ENCODE measurements at regions of chr20 and their contacts with region 1.

Region 1: DNA sequence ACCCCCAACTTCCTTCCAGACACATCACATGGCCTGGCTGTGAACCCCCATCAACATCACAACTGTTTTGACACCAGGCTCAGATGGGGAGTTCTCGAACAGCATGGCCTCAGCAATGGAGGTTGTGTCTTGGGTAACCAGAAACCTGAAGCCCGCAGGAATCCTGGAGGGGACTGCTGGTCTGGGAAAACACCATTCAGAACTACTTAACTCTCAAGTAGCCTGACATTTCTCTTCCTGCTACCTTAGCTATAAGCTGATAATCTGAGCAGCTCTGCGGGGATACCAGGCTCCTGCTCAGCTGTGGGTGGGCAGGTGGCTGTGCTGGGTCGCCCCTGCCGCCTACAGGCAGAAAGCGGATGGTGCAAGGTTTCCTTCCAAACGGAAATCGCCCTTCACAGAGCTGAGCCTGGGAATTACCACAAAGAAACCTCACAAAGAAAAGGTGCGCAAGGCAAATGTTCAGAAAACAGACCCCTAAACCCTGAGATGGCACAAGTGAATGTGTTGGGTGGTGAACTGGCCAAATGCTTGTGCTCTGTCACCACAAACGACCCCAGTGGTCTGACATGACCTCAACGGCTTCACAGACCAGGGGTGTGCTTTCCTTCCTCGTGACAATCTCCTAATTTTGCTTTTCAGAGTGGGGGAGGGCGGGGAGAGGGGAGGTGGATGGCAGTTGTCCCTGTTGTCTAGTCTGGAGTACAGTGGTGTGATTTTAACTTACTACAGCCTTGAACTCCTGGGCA is 29.5 kb downstream of the SNX5 start:
- DNase-seq: peak; percentile 48
- ATAC-seq: peak; percentile 88
- H3K4me3 Mint-ChIP-seq: no peak overlapping the region
- H3K27ac Mint-ChIP-seq: no peak overlapping the region
- H3K4me1 Mint-ChIP-seq: peaks cover 33% of the 10 kb centered on the region
- H3K27me3 Mint-ChIP-seq: no peaks in the 10 kb centered on the region
- CTCF ChIP-seq: peak; percentile 55

Region 2: DNA sequence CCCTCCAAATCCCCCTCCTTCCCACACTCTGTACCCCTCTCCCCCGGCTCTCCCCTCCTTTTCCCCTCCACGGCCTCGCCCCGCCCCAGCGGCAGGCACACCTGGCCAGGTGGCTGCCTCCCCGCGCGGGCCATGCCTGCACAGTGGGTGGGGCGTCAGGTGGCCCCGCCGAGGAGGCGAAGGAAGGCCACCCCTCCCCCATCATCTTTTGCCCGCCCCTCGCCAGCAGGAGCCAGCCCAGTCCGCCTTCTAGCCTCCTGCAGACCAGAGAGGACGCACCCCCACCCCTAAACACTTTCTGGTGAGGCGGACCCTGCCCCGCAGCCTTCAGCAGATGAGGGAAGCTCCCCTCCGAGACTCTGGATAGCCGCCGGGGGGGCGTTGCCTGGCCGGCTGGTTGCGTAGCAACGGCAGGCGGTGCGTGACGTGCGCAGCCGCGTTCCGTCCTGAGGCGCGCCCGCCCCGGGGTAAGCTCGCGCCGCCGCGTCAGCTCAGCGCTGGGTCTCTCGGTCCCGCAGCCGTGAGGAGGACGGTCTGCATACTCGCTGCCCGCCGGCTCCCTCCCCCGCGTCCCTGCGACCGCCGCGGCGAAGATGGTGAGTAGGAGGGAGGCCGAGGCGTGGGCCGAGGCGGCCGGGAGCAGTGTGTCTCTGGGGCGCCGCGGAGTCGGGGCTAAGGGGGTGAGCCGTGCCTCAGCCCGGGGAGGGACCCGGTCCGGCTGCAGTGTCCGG is 369.3 kb before region 1 on chr20 and contains the start of gene DSTN:
- CTCF ChIA-PET with region 1: no interaction called
- POLR2A ChIA-PET with region 1: no interaction called
- intact Hi-C with region 1: loop called (anchors 1 kb)
- DNase-seq: peak; percentile 88
- ATAC-seq: peak; percentile 89
- H3K4me3 Mint-ChIP-seq: peak within 1 kb of the TSS; percentile 93
- H3K27ac Mint-ChIP-seq: peak within 1 kb of the TSS; percentile 85
- H3K4me1 Mint-ChIP-seq: peaks cover 16% of the 10 kb centered on the region
- H3K27me3 Mint-ChIP-seq: peaks cover 2% of the 10 kb centered on the region
- CTCF ChIP-seq: no peak
- total RNA-seq, gene DSTN: 14.4 and 20.1 TPM in 2 replicates

Region 3: DNA sequence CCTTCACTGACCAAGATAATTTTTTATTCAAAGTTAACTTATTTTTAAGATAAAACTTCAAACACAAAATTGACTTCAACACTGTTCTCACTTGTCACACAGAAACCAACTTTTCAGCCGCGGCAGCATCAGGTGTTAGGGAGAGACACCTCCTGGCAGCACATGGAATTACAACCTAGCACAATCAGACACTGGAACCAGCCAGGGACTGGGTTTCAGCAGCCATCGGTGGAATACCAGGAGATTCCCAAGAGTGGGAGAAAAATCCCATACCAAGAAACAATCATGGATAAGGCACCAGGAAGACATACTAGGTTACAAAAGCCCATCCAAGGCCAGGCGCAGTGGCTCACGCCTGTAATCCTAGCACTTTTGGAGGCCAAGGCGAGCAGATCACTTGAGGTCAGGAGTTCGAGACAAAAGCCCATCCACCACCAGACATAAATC is 40.5 kb before region 1 on chr20:
- CTCF ChIA-PET with region 1: interaction called, 24 read pairs
- POLR2A ChIA-PET with region 1: interaction called, 4 read pairs
- intact Hi-C with region 1: loop called (anchors 2 kb)
- DNase-seq: no peak
- ATAC-seq: peak; percentile 78
- H3K4me3 Mint-ChIP-seq: no peak overlapping the region
- H3K27ac Mint-ChIP-seq: no peak overlapping the region
- H3K4me1 Mint-ChIP-seq: peaks cover 53% of the 10 kb centered on the region
- H3K27me3 Mint-ChIP-seq: peaks cover 16% of the 10 kb centered on the region
- CTCF ChIP-seq: peak; percentile 93

Region 4: GRCh38 chr20:17952692-17953684 is 13.9 kb after region 1 on chr20:
- CTCF ChIA-PET with region 1: interaction called, 12 read pairs
- POLR2A ChIA-PET with region 1: no interaction called
- intact Hi-C with region 1: loop called (anchors 2 kb)
- DNase-seq: no peak
- ATAC-seq: no peak
- H3K4me3 Mint-ChIP-seq: no peak overlapping the region
- H3K27ac Mint-ChIP-seq: peak overlapping the region; percentile 71
- H3K4me1 Mint-ChIP-seq: peaks cover 51% of the 10 kb centered on the region
- H3K27me3 Mint-ChIP-seq: no peaks in the 10 kb centered on the region
- CTCF ChIP-seq: no peak

Region 5: DNA sequence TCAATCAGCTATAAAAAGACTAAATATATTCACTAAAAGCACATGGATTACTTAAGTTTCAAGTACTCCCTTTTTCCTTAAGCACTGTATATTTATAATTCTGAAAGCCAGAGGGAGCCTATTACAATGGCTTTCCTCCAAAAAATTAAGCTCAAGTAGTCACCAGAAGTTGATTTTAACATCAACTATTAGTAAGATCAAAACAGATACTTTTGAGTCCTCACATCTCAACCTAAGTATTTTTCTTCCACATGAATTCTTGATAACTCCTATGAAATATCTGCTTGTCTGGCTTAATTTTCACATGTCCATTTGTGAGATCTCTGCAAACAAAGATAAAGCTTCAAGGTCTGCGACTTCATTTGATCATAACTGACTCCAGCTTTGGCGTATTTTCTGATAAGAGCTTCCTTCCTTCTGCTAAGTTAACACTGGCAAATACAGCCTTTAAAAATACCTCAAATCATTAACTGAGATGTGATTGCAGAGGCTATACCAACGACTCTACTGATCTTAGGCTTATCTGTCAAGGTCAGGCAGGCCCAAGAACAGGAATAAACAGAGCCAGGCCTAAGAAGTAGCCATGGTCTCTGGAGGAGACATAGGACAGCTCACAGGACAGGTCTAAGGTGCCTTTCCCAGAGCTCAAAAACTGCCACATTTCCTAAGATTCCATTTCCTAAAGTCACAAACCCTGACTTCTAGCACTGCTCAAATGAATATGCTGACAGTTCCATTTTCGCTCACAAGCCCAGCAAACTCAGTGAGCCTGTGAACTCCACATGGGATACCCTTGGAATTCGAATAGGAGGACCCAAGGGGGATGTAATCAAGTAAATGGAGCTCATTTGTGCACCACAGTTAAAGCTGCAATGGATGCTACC is 19.6 kb after region 1 on chr20:
- CTCF ChIA-PET with region 1: interaction called, 12 read pairs
- POLR2A ChIA-PET with region 1: interaction called, 7 read pairs
- intact Hi-C with region 1: loop called (anchors 2 kb)
- DNase-seq: no peak
- ATAC-seq: no peak
- H3K4me3 Mint-ChIP-seq: peak overlapping the region; percentile 57
- H3K27ac Mint-ChIP-seq: peak overlapping the region; percentile 90
- H3K4me1 Mint-ChIP-seq: peaks cover 94% of the 10 kb centered on the region
- H3K27me3 Mint-ChIP-seq: no peaks in the 10 kb centered on the region
- CTCF ChIP-seq: no peak

Region 6: DNA sequence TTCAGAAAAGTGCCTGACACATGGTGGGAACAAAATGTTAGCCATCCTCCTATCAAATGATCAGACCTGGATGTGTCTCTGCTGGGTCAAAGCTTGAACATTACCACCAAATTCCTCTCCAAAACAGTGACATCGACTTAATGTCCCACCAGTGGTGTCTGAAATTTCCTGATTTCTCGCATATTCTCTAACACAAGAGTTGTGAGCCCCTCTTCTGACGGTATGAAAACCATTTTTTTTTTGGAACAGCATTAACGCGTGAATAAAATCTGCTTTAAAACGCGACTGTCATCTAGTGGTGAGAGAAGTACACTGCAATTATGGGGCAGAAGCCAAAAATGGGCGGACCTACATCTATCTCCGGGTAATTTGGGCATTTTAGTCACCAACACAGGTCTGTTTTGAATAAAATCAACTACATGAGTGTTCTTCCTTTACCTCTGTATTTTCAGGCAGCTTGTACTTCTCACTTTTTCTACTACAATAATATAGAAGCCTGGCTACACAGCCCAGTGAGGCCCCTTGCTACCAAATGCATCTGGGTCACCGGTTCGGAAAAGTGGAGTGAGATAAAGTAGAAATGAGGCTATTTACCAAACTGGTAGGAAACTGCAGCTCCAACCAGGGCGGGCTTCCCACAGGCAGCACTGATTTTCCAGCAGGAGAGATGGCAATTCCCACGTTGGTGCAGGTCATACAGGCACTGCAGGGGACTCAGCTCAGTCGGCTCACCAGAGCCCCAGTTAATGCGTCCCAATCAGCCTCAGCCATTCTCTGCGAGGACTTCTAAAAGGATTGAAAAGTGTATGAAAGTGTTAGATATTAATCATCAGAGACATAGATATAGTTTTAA is 57.1 kb after region 1 on chr20:
- CTCF ChIA-PET with region 1: interaction called, 10 read pairs
- POLR2A ChIA-PET with region 1: no interaction called
- intact Hi-C with region 1: loop called (anchors 1 kb)
- DNase-seq: no peak
- ATAC-seq: peak; percentile 91
- H3K4me3 Mint-ChIP-seq: no peak overlapping the region
- H3K27ac Mint-ChIP-seq: peak overlapping the region; percentile 20
- H3K4me1 Mint-ChIP-seq: peaks cover 29% of the 10 kb centered on the region
- H3K27me3 Mint-ChIP-seq: no peaks in the 10 kb centered on the region
- CTCF ChIP-seq: peak; percentile 89

Region 7: DNA sequence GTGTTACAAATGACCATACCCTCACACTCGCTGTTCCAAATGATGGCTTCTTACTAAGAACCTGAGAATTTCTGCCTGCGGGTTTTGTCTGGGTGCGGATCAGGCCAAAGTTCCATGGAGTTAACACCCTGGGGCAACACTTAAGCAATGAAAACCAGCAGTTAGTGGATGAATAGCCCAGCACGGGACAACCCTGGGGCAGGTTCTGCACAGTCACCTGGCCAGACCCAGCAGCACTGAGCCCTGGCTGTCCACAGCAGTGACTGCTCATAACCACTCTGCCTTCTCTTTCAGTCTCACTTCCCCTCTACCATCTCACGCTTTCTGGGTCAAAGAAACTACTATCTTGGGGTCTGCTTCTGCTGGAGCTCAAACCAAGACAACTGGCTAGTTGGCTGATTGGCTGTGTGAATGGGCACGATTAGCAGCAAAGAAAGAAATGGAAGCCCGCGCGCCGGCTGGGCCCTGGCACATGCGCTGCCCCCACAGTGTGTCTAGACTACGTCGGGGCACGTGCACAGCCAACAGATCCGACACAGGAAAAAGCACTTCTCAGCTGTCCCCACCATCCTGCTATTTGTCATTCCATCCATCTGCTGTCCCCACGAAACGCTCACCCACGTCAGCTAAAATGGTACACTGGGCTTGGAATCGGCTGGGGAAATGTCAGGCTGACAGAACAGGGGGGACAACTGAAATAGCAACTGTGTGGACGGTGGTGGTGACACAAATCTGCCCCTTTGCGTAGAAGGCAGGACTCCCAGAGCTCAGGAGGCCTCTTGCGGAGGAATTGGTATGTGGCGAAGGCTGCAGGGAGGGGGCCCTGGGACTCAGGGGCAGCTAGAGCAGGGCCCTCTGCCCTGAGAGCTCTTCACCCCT is 66.4 kb after region 1 on chr20:
- CTCF ChIA-PET with region 1: no interaction called
- POLR2A ChIA-PET with region 1: interaction called, 10 read pairs
- intact Hi-C with region 1: no loop called
- DNase-seq: peak; percentile 26
- ATAC-seq: peak; percentile 86
- H3K4me3 Mint-ChIP-seq: peak overlapping the region; percentile 67
- H3K27ac Mint-ChIP-seq: peak overlapping the region; percentile 81
- H3K4me1 Mint-ChIP-seq: peaks cover 33% of the 10 kb centered on the region
- H3K27me3 Mint-ChIP-seq: no peaks in the 10 kb centered on the region
- CTCF ChIP-seq: no peak

Region 8: DNA sequence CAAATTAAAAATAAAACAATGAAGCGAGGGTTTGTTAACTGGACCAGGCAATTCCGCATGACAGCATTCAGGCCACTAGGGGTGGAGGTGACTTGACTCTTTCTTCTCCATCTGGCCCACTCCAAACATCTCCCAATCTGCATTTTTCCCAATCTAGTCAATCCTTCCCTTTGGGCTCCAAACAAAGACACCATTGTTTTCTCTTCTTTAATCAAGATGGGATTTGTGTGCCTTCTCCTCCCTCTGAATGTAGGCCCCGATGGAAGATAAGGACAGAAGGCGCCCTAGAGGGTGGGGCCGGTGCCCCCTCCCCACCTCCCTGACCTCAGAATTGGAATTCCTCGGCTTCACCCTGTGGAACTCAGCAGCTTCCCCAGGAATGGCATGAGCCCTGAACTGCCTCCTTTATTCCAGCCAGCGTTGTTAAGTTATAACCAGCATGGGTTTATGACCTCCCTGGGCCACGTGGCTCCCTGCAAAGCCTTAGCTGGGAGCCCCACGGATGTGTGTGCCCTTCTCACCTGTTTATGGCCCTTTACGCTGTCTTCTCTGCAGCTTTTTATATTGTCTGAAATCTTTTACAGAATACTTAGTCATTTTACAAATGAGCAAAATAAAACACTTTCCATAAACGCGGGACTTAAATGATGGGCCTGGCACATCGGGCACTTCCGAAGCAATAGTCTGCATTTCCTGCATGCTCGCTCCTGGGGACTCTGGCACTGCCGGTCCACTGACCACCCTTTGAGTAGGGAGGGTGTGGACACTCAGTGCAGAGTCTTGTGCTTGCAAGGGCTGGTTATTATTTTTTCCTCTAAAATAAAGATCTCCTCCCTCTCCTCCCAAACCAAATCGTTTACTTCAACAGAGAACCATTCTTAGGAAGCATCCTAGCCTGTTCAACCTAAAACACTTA is 94.2 kb after region 1 on chr20:
- CTCF ChIA-PET with region 1: no interaction called
- POLR2A ChIA-PET with region 1: no interaction called
- intact Hi-C with region 1: no loop called
- DNase-seq: no peak
- ATAC-seq: no peak
- H3K4me3 Mint-ChIP-seq: no peak overlapping the region
- H3K27ac Mint-ChIP-seq: no peak overlapping the region
- H3K4me1 Mint-ChIP-seq: no peaks in the 10 kb centered on the region
- H3K27me3 Mint-ChIP-seq: peaks cover 10% of the 10 kb centered on the region
- CTCF ChIP-seq: no peak

Region 9: DNA sequence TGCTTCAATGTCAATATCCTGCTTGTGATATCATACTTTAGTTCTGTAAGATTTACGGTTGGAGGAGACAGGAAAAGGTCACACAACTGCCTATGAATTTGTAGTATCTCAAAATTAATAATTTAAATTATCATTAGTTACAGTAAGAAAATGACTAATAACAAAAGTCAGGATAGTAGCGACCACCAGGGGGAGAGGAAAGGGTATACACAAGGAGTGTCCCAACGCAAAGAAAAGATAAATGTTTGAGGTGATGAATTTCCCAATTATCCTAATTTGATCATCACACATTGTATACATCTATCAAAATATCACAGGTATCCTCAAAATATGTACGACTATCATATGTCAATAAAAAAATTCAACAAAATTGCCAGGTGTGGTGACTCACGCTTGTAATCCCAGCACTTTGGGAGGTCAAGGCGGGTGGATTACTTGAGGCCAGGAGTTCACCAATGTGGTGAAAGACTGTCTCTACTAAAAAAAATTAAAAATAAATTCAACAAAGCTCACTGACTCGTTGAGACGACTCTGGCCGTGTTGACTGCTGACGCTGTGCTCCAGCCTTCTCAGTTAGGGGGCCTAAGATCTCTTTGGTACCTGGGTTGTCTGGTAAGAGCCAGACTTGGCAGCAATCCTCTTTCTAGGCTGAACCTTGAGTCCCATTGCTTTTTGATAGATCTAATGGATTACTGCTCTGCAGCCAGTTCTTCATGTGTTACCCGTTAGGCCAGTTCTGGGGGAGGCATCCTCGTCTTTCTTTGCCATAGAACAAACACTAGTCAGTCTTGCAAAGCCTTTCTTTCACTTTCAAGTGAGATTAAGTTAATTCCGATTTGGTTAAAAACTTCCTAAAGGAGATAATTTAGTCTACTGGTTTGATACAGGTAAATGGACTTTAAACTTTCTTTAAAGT is 127.6 kb after region 1 on chr20:
- CTCF ChIA-PET with region 1: no interaction called
- POLR2A ChIA-PET with region 1: no interaction called
- intact Hi-C with region 1: no loop called
- DNase-seq: no peak
- ATAC-seq: no peak
- H3K4me3 Mint-ChIP-seq: no peak overlapping the region
- H3K27ac Mint-ChIP-seq: no peak overlapping the region
- H3K4me1 Mint-ChIP-seq: no peaks in the 10 kb centered on the region
- H3K27me3 Mint-ChIP-seq: peaks cover 12% of the 10 kb centered on the region
- CTCF ChIP-seq: no peak

Measured in activated B cell treated with CpG ODN at 0.5 μM for 24 hours (primary cell).